ENCODE measurements at regions of chr1 and their contacts with region 1.

Region 1: DNA sequence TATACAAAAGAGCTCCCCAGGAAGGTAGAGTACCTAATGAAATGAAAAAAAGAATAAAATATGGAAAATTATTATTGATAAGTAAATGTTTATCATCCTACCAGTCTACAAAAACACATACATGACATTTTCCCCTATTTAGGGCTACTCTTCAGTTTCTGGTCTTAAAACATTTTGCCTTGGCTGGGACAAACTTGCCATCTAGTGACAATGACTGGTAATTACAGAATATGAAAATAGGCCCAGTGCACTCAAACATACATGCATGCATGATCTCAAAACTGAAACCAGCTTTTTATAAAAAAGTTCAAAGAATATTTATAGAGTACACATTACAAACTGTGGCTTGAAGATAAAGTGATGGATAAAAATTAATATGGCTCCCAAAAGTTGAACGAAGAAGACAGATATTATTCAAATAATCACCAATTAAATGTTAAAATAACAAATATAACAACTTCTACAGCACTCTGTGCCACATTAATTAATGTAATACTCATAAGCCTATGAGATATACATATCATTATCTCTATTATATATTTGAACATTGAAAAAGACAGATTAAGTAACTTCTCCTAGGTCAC is 10.5 kb upstream of the RNPC3 start:
- DNase-seq: no peak
- H3K4me3 Mint-ChIP-seq: no peak overlapping the region
- H3K27ac Mint-ChIP-seq: no peak overlapping the region
- H3K4me1 Mint-ChIP-seq: peaks cover 18% of the 10 kb centered on the region
- H3K27me3 Mint-ChIP-seq: no peaks in the 10 kb centered on the region

Region 2: GRCh38 chr1:103106426-103107341 is 408.3 kb before region 1 on chr1:
- intact Hi-C with region 1: loop called (anchors 2 kb)
- DNase-seq: no peak
- H3K4me3 Mint-ChIP-seq: no peak overlapping the region
- H3K27ac Mint-ChIP-seq: no peak overlapping the region
- H3K4me1 Mint-ChIP-seq: no peaks in the 10 kb centered on the region
- H3K27me3 Mint-ChIP-seq: peaks cover 24% of the 10 kb centered on the region

Region 3: DNA sequence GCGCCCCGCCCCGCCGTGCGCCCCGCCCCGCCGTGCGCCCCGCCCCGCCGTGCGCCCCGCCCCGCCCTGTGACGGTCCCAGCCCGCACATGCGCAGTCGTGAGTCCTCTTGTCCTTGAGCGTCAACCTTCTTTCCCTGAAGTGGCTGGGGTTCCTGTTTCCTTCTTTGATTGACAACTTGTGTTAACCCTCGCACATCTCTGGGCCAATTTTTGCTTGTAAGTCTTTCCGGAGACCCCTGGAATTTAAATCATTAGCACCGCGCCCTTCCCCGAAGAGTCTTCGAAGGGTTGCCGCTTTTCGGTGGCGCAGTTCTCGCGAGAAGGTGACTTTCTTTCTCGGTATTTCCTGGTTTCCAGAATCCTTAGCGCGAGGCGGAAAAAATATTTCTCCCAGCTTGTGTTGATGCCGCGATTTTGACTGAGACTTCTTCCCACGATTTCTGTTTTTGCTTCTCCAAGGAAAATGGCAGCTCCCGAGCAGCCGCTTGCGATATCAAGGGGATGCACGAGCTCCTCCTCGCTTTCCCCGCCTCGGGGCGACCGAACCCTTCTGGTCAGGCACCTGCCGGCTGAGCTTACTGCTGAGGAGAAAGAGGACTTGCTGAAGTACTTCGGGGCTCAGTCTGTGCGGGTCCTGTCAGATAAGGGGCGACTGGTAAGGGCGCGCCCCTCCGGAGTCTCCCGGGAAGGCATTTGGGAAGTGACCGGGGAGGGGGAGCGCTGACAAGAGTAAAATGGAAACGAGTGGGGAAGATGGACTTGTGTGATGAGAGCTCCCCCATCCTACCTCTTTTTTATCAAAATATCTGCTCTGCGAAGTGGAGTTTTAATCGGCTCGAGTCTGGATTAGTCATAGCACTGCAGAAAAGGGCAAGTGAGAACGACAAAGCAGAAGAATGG is 10.8 kb after region 1 on chr1 and contains the start of gene RNPC3:
- intact Hi-C with region 1: loop called (anchors 1 kb)
- DNase-seq: peak; percentile 80
- H3K4me3 Mint-ChIP-seq: peak within 1 kb of the TSS; percentile 98
- H3K27ac Mint-ChIP-seq: peak within 1 kb of the TSS; percentile 99
- H3K4me1 Mint-ChIP-seq: peaks cover 44% of the 10 kb centered on the region
- H3K27me3 Mint-ChIP-seq: peaks cover 6% of the 10 kb centered on the region
- total RNA-seq, gene RNPC3: 17.1 and 20.6 TPM in 2 replicates

Measured in activated T-helper 1 cell treated with anti-CD3 and anti-CD28 coated beads, Interleukin-12 subunit alpha, Interleukin-12 subunit beta, Interleukin-2, Interleukin-4 antibody, amounts not matched to agents 30 ng/mL and 10 ng/mL and 1 ng/mL, durations not matched to agents 14 hours and 24 hours and 36 hours (primary cell).